ENCODE measurements at regions of chr5 and their contacts with region 1.

Region 1: GRCh38 chr5:176647030-176647866 is at the start of gene TSPAN17:
- DNase-seq: peak; percentile 92 to 98
- ATAC-seq: peak; percentile 82 to 95
- H3K4me3 ChIP-seq: peak within 1 kb of the TSS; percentile 66
- H3K27ac ChIP-seq: peak within 1 kb of the TSS; percentile 86 to 94
- H3K4me1 ChIP-seq: peaks cover 14% of the 10 kb centered on the region
- CTCF ChIP-seq: peak; percentile 30; the same call in 2 of the 3 replicates
- EP300 ChIP-seq: no peak
- POLR2A ChIP-seq: peak; percentile 97
- RAD21 ChIP-seq: peak; percentile 32 to 66
- polyA plus RNA-seq, gene TSPAN17: 33.7 and 35.6 TPM in 2 replicates

Region 2: GRCh38 chr5:176608937-176609723 is 38.1 kb before region 1 on chr5:
- CTCF ChIA-PET with region 1: interaction called, 10 read pairs
- POLR2A ChIA-PET with region 1: interaction called, 5 read pairs
- DNase-seq: no peak
- ATAC-seq: peak in 1 of 2 experiments; percentile 12; a peak in 4 of 6 replicates
- H3K4me3 ChIP-seq: peak overlapping the region; percentile 94
- H3K27ac ChIP-seq: peak overlapping the region; percentile 84 to 95
- H3K4me1 ChIP-seq: peaks cover 14% of the 10 kb centered on the region
- CTCF ChIP-seq: no peak
- EP300 ChIP-seq: no peak
- POLR2A ChIP-seq: no peak
- RAD21 ChIP-seq: no peak

Region 3: DNA sequence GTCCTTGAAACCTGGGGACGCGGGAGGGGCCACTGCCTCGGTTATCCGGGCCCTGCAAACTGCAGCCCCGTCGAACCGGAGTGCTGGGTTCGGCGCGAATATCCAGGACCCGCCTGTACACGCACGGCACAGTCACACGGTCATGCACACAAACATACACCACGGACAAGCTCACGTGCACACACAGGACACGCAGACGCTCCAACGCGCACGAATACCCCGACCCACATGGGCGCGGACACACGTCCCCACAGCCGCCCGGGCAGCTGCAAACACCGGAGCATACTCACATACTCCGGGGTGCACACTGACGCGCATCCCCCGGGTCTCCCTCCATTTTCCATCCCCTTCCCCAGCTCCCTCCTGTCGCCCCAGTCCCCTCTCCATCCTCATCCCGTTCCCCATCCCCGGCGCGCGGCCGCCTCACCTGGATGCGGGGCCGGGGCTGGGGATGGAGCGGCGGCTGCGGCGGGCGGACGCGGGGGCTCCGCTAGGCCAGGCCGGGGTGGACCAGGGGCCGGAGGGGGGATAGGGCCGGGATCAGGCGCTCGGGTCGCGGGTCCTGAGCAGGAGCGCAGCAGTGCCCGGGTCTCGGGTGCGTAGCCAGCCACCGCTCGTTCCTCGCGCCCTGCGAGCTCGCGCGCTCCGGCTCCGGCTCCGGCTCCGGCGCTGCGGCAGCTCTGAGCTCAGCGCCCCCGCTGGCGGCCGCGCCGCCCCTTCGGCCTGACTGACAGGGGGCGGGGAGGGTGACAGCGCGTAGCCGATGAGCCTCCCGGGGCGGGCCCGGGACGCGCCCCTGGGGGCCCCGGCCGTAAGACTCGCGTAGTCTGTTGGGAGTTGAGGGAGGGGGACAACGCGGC is 17.2 kb before region 1 on chr5 and contains the starts of genes EIF4E1B and SNCB:
- CTCF ChIA-PET with region 1: interaction called, 5 read pairs
- POLR2A ChIA-PET with region 1: interaction called, 24 read pairs
- DNase-seq: peak; percentile 37 to 64
- ATAC-seq: peak; percentile 75 to 92
- H3K4me3 ChIP-seq: peak within 1 kb of the TSS; percentile 53
- H3K27ac ChIP-seq: peak within 1 kb of the TSS in 1 of 2 experiments; percentile 65; a peak in 2 of 6 replicates
- H3K4me1 ChIP-seq: peaks cover 8% of the 10 kb centered on the region; the same call in 1 of the 3 replicates
- CTCF ChIP-seq: no peak
- EP300 ChIP-seq: no peak
- POLR2A ChIP-seq: no peak
- RAD21 ChIP-seq: no peak
- polyA plus RNA-seq, gene EIF4E1B: not detected in 2 replicates
- polyA plus RNA-seq, gene SNCB: 0.26 and 0.37 TPM in 2 replicates

Measured in A549 (cell line).